CD8-positive, alpha-beta T cell (primary cell): ENCODE measurements at regions of chr14 and their contacts with region 1.

Region 1: GRCh38 chr14:97620066-97620465 is 822.9 kb downstream of the VRK1 start:
- DNase-seq: peak in 1 of 9 experiments; percentile 42
- ATAC-seq: peak; percentile 15
- H3K4me3 ChIP-seq: peak overlapping the region in 1 of 2 experiments; percentile 12
- H3K4me3 Mint-ChIP-seq: peak overlapping the region; percentile 83
- H3K27ac ChIP-seq: peak overlapping the region; percentile 36 to 84
- H3K27ac Mint-ChIP-seq: peak overlapping the region; percentile 98
- H3K4me1 ChIP-seq: peaks cover 43% of the 10 kb centered on the region
- H3K4me1 Mint-ChIP-seq: peaks cover 53% of the 10 kb centered on the region
- H3K27me3 ChIP-seq: no peaks in the 10 kb centered on the region
- H3K27me3 Mint-ChIP-seq: no peaks in the 10 kb centered on the region
- CTCF ChIP-seq: no peak

Region 2: GRCh38 chr14:97233319-97233985 is 386.6 kb before region 1 on chr14:
- CTCF ChIA-PET with region 1: no interaction called
- POLR2A ChIA-PET with region 1: no interaction called
- intact Hi-C with region 1: no loop called
- DNase-seq: no peak
- ATAC-seq: no peak
- H3K4me3 ChIP-seq: no peak overlapping the region
- H3K4me3 Mint-ChIP-seq: no peak overlapping the region
- H3K27ac ChIP-seq: no peak overlapping the region
- H3K27ac Mint-ChIP-seq: no peak overlapping the region
- H3K4me1 ChIP-seq: no peaks in the 10 kb centered on the region
- H3K4me1 Mint-ChIP-seq: no peaks in the 10 kb centered on the region
- H3K27me3 ChIP-seq: no peaks in the 10 kb centered on the region
- H3K27me3 Mint-ChIP-seq: peaks cover 5% of the 10 kb centered on the region
- CTCF ChIP-seq: no peak

Region 3: DNA sequence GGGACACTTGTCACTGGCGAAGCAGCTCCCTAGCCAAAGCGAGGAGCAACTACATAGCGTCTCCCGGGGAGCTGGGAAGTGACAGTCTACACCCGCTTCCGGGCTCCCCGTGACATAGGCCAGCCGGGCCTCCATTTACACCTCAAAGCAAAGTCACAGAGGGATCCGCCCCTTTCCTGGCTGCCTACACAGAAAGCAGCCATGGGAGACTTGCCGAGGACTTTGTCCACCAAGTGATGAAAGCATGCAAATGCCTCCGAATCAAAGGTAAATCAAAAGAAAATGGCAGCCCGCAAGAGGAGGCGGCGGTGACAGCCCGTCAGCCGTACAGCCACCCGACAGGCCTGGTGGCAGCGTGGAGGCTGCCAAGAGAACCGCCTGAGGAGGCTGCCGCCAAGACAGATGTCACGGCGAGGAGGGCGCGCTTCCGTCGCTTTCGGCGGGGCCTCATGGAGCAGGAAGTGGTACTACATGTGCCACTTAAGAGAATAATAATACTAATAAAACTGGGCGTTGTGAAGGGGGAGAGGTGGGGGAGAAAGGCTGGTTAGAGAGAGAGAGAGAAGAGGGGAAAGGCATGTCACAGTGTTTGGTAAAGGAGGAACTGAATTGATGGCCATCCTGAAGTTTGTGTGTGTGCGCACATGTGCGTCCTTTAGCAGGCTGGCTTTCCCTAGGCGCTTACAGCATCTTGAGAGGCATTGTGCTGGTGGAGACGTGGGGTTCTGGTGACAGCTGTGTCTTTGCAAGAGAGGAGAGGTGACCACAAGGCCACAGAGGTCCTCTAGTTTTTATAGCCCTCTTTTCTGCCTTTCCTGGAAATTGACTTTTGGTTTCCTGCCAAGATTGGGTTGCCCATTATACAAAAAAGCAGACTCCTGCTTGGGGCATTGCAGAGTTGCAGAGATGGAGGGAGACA is 161.1 kb before region 1 on chr14:
- CTCF ChIA-PET with region 1: no interaction called
- POLR2A ChIA-PET with region 1: no interaction called
- intact Hi-C with region 1: loop called (anchors 5 kb)
- DNase-seq: peak; percentile 60 to 92 (median 84)
- ATAC-seq: peak; percentile 81
- H3K4me3 ChIP-seq: peak overlapping the region; percentile 53 to 62
- H3K4me3 Mint-ChIP-seq: peak overlapping the region; percentile 88
- H3K27ac ChIP-seq: peak overlapping the region; percentile 82 to 88
- H3K27ac Mint-ChIP-seq: peak overlapping the region; percentile 97
- H3K4me1 ChIP-seq: peaks cover 34% of the 10 kb centered on the region
- H3K4me1 Mint-ChIP-seq: peaks cover 75% of the 10 kb centered on the region
- H3K27me3 ChIP-seq: no peaks in the 10 kb centered on the region
- H3K27me3 Mint-ChIP-seq: no peaks in the 10 kb centered on the region
- CTCF ChIP-seq: no peak

Region 4: GRCh38 chr14:97707603-97708002 is 87.5 kb after region 1 on chr14:
- CTCF ChIA-PET with region 1: interaction called, 4 read pairs
- POLR2A ChIA-PET with region 1: interaction called, 3 read pairs
- intact Hi-C with region 1: loop called (anchors 5 kb)
- DNase-seq: peak in 6 of 9 experiments; percentile 26 to 68 (median 50)
- ATAC-seq: peak; percentile 13
- H3K4me3 ChIP-seq: peak overlapping the region; percentile 6 to 16
- H3K4me3 Mint-ChIP-seq: peak overlapping the region; percentile 63
- H3K27ac ChIP-seq: peak overlapping the region in 1 of 2 experiments; percentile 63
- H3K27ac Mint-ChIP-seq: peak overlapping the region; percentile 78
- H3K4me1 ChIP-seq: peaks cover 84% of the 10 kb centered on the region
- H3K4me1 Mint-ChIP-seq: peaks cover 97% of the 10 kb centered on the region
- H3K27me3 ChIP-seq: no peaks in the 10 kb centered on the region
- H3K27me3 Mint-ChIP-seq: no peaks in the 10 kb centered on the region
- CTCF ChIP-seq: no peak